Panc1 (cell line): ENCODE measurements at regions of chr15 and their contacts with region 1.

Region 1: DNA sequence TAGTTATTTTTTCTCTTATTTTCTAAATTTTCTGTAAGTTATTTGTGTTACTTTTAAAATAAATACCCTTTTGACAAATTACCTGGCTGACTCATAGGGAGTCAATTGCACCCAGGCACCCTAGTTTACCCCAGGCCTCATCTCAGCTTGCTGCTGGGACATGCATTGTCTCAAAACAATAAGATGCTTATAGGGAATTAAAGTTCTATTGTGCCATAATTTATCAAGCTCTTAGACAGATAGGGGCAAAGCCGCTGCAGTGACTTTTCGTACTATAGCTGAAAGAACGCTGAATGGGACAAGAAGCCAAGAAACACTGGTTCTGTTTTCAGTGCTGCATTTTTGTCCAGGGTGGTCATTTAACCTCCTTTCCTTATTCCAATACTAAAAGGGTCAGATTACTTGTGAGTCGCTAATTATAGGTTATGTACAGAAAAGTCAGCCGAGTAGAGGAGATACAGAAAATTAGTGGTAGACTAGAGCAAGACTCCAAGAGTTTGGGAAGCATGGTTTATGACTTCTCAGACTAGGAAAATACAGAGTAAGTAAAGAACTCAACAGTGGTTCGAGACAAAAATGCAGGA is 50.3 kb downstream of the EXD1 start:
- DNase-seq: no peak
- ATAC-seq: no peak
- H3K4me3 ChIP-seq: no peak overlapping the region
- H3K27ac ChIP-seq: no peak overlapping the region
- H3K4me1 ChIP-seq: no peaks in the 10 kb centered on the region
- H3K27me3 ChIP-seq: no peaks in the 10 kb centered on the region
- CTCF ChIP-seq: no peak

Region 2: GRCh38 chr15:40941528-40942336 is 238.6 kb before region 1 on chr15:
- CTCF ChIA-PET with region 1: no interaction called
- POLR2A ChIA-PET with region 1: no interaction called
- in situ Hi-C with region 1: no loop called
- intact Hi-C with region 1: loop called (anchors 10 kb)
- DNase-seq: no peak
- ATAC-seq: peak; percentile 91
- H3K4me3 ChIP-seq: peak overlapping the region; percentile 50 to 51
- H3K27ac ChIP-seq: peak overlapping the region; percentile 79
- H3K4me1 ChIP-seq: peaks cover 19% of the 10 kb centered on the region
- H3K27me3 ChIP-seq: no peaks in the 10 kb centered on the region
- CTCF ChIP-seq: peak; percentile 99

Region 3: GRCh38 chr15:41031232-41032078 is 148.8 kb before region 1 on chr15:
- CTCF ChIA-PET with region 1: no interaction called
- POLR2A ChIA-PET with region 1: interaction called, 13 read pairs
- in situ Hi-C with region 1: no loop called
- intact Hi-C with region 1: loop called (anchors 10 kb)
- DNase-seq: no peak
- ATAC-seq: peak; percentile 74
- H3K4me3 ChIP-seq: no peak overlapping the region
- H3K27ac ChIP-seq: no peak overlapping the region
- H3K4me1 ChIP-seq: peaks cover 5% of the 10 kb centered on the region; the same call in 1 of the 2 replicates
- H3K27me3 ChIP-seq: no peaks in the 10 kb centered on the region
- CTCF ChIP-seq: no peak

Region 4: GRCh38 chr15:41079717-41080116 is 100.6 kb before region 1 on chr15:
- CTCF ChIA-PET with region 1: no interaction called
- POLR2A ChIA-PET with region 1: no interaction called
- in situ Hi-C with region 1: no loop called
- intact Hi-C with region 1: loop called (anchors 10 kb)
- DNase-seq: no peak
- ATAC-seq: no peak
- H3K4me3 ChIP-seq: no peak overlapping the region
- H3K27ac ChIP-seq: no peak overlapping the region
- H3K4me1 ChIP-seq: no peaks in the 10 kb centered on the region
- H3K27me3 ChIP-seq: no peaks in the 10 kb centered on the region
- CTCF ChIP-seq: no peak

Region 5: GRCh38 chr15:41304149-41304770 is 124.0 kb after region 1 on chr15:
- CTCF ChIA-PET with region 1: no interaction called
- POLR2A ChIA-PET with region 1: no interaction called
- in situ Hi-C with region 1: no loop called
- intact Hi-C with region 1: no loop called
- DNase-seq: no peak
- ATAC-seq: no peak
- H3K4me3 ChIP-seq: no peak overlapping the region
- H3K27ac ChIP-seq: no peak overlapping the region
- H3K4me1 ChIP-seq: no peaks in the 10 kb centered on the region
- H3K27me3 ChIP-seq: no peaks in the 10 kb centered on the region
- CTCF ChIP-seq: no peak

Region 6: GRCh38 chr15:41512940-41513510 is 332.7 kb after region 1 on chr15:
- CTCF ChIA-PET with region 1: no interaction called
- POLR2A ChIA-PET with region 1: no interaction called
- in situ Hi-C with region 1: no loop called
- intact Hi-C with region 1: no loop called
- DNase-seq: no peak
- ATAC-seq: no peak
- H3K4me3 ChIP-seq: no peak overlapping the region
- H3K27ac ChIP-seq: no peak overlapping the region
- H3K4me1 ChIP-seq: peaks cover under 1% of the 10 kb centered on the region
- H3K27me3 ChIP-seq: no peaks in the 10 kb centered on the region
- CTCF ChIP-seq: no peak